AG04449 (cell line): ENCODE measurements at regions of chr1 and their contacts with region 1.

Region 1: GRCh38 chr1:24897767-24898483 is 32.2 kb downstream of the RUNX3 start:
- DNase-seq: no peak
- H3K4me3 ChIP-seq: no peak overlapping the region
- CTCF ChIP-seq: peak; percentile 95

Region 2: DNA sequence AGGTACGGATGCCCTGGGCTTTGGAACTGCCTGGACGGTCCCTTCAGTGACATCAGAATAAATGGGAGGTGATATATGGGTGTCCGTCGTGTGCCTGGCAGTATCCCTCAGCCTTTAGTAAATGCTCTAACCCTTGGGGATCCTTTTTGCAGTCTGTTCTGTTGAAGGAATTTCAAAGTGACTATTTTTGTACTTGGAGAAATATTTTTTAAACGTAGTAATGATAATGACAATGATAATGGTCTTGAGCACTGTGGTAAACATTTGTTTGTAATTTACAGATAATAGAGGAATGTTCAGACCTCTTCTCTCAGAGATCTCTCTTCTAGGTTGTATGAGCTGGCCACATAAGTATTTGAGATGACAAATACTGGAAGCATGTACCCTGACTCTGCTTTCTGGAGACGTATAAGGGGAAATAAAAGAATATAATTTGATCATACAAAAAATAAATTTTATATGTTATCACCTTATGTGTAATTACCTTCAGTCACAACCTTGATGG is 296.9 kb before region 1 on chr1:
- CTCF ChIA-PET with region 1: no interaction called
- POLR2A ChIA-PET with region 1: no interaction called
- DNase-seq: peak; percentile 10
- H3K4me3 ChIP-seq: no peak overlapping the region
- CTCF ChIP-seq: no peak

Region 3: GRCh38 chr1:24861821-24862727 is 35.9 kb before region 1 on chr1:
- CTCF ChIA-PET with region 1: interaction called, 27 read pairs
- POLR2A ChIA-PET with region 1: no interaction called
- DNase-seq: no peak
- H3K4me3 ChIP-seq: no peak overlapping the region
- CTCF ChIP-seq: peak; percentile 5

Region 4: GRCh38 chr1:24878775-24879742 is 18.9 kb before region 1 on chr1:
- CTCF ChIA-PET with region 1: interaction called, 17 read pairs
- POLR2A ChIA-PET with region 1: no interaction called
- DNase-seq: peak; percentile 21
- H3K4me3 ChIP-seq: no peak overlapping the region
- CTCF ChIP-seq: no peak

Region 5: DNA sequence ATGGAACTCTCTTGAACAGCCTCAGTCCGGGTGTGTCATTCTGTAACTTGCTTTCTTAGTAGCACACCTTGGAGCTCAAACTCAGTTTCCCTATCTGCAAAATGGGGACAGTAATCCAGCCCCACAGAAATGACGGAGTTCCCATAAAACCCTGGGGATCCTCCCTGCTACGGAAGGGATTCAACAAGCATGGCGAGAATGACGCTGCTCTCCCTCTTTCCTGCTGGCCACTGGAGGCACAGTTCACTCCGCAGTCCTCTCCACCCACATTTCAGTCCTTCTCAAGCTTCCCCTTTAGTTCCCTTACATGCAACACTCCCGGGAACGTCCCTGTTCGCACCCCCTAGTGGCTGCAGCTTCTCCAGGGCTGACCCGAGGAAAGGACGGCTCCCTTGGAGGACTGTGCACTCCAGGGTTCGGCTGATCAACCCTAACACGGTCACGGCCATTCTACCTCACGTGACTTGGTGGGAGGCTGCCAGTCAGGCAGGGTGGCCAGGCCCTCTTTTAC is 11.5 kb after region 1 on chr1:
- CTCF ChIA-PET with region 1: interaction called, 34 read pairs
- POLR2A ChIA-PET with region 1: no interaction called
- DNase-seq: no peak
- H3K4me3 ChIP-seq: no peak overlapping the region
- CTCF ChIP-seq: peak; percentile 40

Region 6: DNA sequence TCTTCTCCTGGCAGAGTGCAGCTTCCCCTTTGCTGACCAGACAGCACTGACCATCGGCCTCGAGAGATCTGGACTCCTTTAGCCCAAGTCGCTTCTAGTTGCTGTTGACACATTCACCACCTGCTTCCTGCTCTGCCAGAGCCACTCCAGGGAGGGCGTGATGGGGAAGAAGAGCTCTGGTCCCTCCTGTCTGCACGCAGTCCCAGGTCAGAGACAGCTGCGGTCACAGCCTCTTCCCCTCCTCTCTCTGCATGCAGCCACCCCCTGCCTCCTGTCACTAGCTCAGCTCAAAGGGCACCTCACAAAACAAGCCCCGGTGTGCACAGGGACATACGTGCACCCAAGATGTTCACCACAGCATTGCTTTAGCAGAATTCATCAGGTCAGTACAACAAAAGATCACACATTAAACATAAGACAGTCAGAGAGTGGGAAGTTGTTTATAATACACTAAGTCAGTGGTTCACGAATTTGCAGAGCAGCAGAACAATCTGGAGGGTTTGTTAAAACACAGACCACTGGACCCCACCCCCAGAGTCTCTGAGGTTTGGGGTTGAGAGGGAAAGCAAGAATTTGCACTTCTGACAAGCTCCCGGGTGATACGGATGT is 201.5 kb after region 1 on chr1:
- CTCF ChIA-PET with region 1: interaction called, 12 read pairs
- POLR2A ChIA-PET with region 1: no interaction called
- DNase-seq: no peak
- H3K4me3 ChIP-seq: no peak overlapping the region
- CTCF ChIP-seq: no peak